Natural killer cell (primary cell): ENCODE measurements at regions of chr1 and their contacts with region 1.

Region 1: GRCh38 chr1:239951511-239952140 is 140.1 kb upstream of the FMN2 start:
- DNase-seq: peak in 1 of 2 donors; percentile 65
- ATAC-seq: peak in 1 of 3 donors; percentile 49
- H3K4me3 ChIP-seq: no peak overlapping the region
- H3K4me3 Mint-ChIP-seq: no peak overlapping the region
- H3K27ac ChIP-seq: no peak overlapping the region
- H3K27ac Mint-ChIP-seq: no peak overlapping the region
- H3K4me1 ChIP-seq: no peaks in the 10 kb centered on the region
- H3K4me1 Mint-ChIP-seq: no peaks in the 10 kb centered on the region
- H3K27me3 ChIP-seq: no peaks in the 10 kb centered on the region
- H3K27me3 Mint-ChIP-seq: no peaks in the 10 kb centered on the region
- CTCF ChIP-seq: peak; percentile 74

Region 2: GRCh38 chr1:239976130-239976968 is 24.7 kb after region 1 on chr1:
- intact Hi-C with region 1: loop called (anchors 1 kb)
- DNase-seq: peak; percentile 27 to 65
- ATAC-seq: peak; percentile 47 to 74 (median 66)
- H3K4me3 ChIP-seq: no peak overlapping the region
- H3K4me3 Mint-ChIP-seq: no peak overlapping the region
- H3K27ac ChIP-seq: no peak overlapping the region
- H3K27ac Mint-ChIP-seq: no peak overlapping the region
- H3K4me1 ChIP-seq: no peaks in the 10 kb centered on the region
- H3K4me1 Mint-ChIP-seq: no peaks in the 10 kb centered on the region
- H3K27me3 ChIP-seq: no peaks in the 10 kb centered on the region
- H3K27me3 Mint-ChIP-seq: no peaks in the 10 kb centered on the region
- CTCF ChIP-seq: peak; percentile 98